ENCODE measurements at regions of chr4 and their contacts with region 1.

Region 1: DNA sequence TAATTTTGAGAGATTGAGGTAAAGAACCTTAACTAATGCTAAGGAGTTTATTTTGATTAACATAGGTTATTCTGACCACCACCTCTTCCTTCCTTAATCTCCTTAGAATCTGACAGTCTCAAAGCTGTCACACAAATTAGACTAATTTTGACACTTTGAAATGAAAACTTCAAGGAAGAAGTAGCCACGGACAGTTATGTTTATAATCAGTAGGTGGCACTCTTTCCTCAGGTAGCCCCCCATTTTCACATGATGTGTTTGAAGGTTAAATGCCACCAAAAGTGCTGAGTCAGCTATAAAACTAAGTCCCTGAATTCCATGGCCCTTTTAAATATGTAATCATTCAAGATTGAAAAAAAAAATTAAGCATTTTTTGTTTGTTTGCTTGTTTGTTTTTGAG is 22.4 kb downstream of the TMEM33 start:
- DNase-seq: peak; percentile 45
- CTCF ChIP-seq: peak; percentile 54

Region 2: GRCh38 chr4:42262701-42263490 is 305.3 kb after region 1 on chr4:
- in situ Hi-C with region 1: loop called (anchors 25 kb)
- DNase-seq: no peak
- CTCF ChIP-seq: no peak

Region 3: GRCh38 chr4:42519803-42520417 is 562.3 kb after region 1 on chr4:
- in situ Hi-C with region 1: loop called (anchors 25 kb)
- DNase-seq: peak; percentile 23
- CTCF ChIP-seq: peak; percentile 64